Heart right ventricle (tissue), 16 donors: ENCODE measurements at regions of chr1 and their contacts with region 1.

Region 1: DNA sequence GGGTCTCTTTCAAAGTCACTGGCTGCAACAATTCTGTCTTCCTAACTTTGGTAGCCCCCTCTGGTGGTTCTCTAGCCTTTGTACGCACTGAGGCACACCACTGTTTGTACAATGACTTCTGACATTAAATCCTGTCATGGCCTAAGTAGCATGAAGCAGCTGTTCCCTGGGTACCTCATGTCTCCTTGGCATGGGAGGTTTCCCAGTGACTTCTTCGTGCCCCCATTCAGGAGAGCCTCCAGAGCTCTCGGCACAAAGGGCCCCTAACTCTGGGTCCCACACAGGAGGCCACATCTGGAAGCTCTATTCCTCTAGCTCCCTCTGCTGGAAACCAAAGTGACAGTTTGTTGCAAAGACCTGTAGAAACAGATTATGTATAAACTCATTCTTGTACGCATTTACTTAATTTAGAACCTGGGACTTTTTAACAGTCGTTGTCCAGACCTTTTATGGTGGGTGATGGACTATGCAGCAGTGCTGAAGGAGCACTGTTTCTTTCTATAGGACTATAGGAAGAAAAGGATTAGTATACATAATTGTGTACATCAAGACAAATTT is 13.4 kb downstream of the SWT1 start:
- DNase-seq: peak in 1 of 2 donors; percentile 40
- ATAC-seq: peak in 7 of 8 donors; percentile 22 to 77 (median 60)
- H3K4me3 ChIP-seq: no peak overlapping the region
- H3K27ac ChIP-seq: no peak overlapping the region
- H3K4me1 ChIP-seq: no peaks in the 10 kb centered on the region
- H3K27me3 ChIP-seq: no peaks in the 10 kb centered on the region
- CTCF ChIP-seq: peak in 8 of 9 donors; percentile 39 to 77 (median 67)

Region 2: GRCh38 chr1:184805667-184806295 is 364.6 kb before region 1 on chr1:
- intact Hi-C with region 1: loop called in 4 of 10 experiments (anchors 5 to 10 kb)
- DNase-seq: peak; percentile 86 to 91
- ATAC-seq: peak; percentile 91 to 98 (median 95)
- H3K4me3 ChIP-seq: no peak overlapping the region
- H3K27ac ChIP-seq: peak overlapping the region in 8 of 10 donors; percentile 7 to 83 (median 41)
- H3K4me1 ChIP-seq: peaks cover 0 to 21% (median 9%) of the 10 kb centered on the region in 9 donors
- H3K27me3 ChIP-seq: no peaks in the 10 kb centered on the region
- CTCF ChIP-seq: peak; percentile 75 to 97 (median 92)

Region 3: DNA sequence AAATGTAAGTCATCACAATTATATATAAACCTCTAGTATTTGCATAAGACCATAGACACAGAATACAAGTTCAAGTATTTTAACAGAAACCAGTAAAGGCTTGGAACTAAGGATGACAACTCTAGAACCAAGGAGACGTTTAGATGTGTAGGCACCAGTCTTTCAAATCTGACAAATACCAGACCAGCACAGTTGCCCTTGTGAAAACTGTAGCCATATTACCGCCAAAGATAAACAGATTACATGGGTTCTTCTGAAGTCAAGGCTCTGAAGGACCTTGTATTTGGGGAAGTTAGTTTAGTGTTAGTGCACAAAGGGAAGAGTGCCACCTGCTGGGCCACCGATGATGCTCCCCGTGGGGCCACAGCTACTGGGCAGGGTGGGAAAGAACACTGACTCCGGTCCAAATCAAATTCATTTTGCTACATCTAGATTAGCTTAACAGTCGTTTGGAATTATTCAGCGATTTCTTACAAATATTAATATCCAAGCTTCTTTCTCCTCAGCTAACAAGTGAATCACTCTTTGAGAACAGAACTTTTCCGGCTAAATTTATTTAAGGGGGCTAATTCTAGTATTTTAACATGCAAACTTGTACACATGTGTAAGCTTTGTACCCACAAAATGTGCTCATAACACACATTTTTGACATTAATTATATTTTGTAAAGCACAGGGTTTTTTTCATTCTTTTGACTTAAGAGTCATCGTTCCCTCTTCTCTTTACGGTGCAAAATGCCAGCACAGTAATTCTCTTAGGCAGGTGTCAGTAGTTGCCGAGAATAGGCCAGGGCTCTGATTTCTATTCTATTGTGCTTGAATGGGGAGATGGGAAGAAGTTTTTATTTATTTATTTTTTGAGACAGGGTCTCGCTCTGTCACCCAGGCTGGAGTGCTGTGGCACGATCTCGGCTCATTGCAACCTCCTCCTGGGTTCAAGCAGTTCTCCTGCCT is 188.1 kb before region 1 on chr1:
- intact Hi-C with region 1: loop called in 1 of 10 experiments (anchors 5 kb)
- DNase-seq: peak; percentile 77 to 80
- ATAC-seq: peak; percentile 92 to 97 (median 96)
- H3K4me3 ChIP-seq: no peak overlapping the region
- H3K27ac ChIP-seq: peak overlapping the region in 1 of 10 donors; percentile 39
- H3K4me1 ChIP-seq: peaks cover 0 to 9% (median 0%) of the 10 kb centered on the region in 9 donors
- H3K27me3 ChIP-seq: no peaks in the 10 kb centered on the region
- CTCF ChIP-seq: peak; percentile 81 to 99 (median 95)

Region 4: DNA sequence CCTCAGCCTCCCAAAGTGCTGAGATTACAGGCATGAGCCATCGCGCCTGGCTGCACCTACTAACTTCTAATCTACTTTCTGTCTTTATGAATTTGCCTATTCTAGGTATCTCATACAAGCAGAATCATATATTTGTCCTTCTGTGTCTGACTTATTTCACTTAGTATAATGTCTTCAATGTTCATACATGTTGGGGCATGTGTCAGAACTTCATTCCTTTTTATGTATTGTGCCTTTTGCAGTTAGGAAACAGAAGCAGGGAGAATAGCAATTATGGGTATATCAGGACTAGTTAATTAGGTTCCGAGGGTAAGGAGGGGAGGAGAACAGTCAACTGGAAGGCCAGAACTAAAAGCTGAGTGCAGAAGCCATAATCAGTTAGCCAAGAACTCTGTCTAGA is 178.1 kb before region 1 on chr1:
- intact Hi-C with region 1: loop called in 2 of 10 experiments (anchors 5 to 10 kb)
- DNase-seq: no peak
- ATAC-seq: no peak
- H3K4me3 ChIP-seq: no peak overlapping the region
- H3K27ac ChIP-seq: no peak overlapping the region
- H3K4me1 ChIP-seq: peaks cover 0 to 8% (median 0%) of the 10 kb centered on the region in 9 donors
- H3K27me3 ChIP-seq: no peaks in the 10 kb centered on the region
- CTCF ChIP-seq: no peak